Heart left ventricle (tissue), 16 donors: ENCODE measurements at regions of chr20 and their contacts with region 1.

Region 1: DNA sequence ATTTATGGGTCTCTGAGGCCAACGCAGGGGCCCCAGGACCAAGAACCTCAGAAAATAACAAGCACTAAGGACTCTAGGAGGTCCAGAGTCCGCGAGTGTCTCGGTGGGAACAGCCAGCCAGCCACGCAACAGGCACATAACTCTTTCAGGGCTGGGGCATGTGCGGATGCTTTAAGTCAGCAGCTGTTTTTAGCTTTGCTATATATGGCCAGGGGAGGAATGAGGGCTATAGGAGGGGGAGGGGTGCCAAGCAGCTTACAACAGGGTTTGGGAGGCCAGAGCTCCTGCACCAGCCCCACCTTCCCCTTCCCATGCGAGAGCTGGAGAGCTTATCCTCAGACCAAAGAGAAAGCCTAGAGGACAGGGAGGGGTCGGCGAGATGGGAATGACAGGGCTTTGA is 6.2 kb downstream of the JPH2 start:
- DNase-seq: peak; percentile 65 to 89 (median 80)
- ATAC-seq: peak; percentile 83 to 90 (median 88)
- H3K4me3 ChIP-seq: peak overlapping the region in 9 of 12 donors; percentile 7 to 87 (median 67)
- H3K27ac ChIP-seq: peak overlapping the region; percentile 64 to 97 (median 88)
- H3K4me1 ChIP-seq: peaks cover 0 to 57% (median 22%) of the 10 kb centered on the region in 12 donors
- H3K27me3 ChIP-seq: peaks cover 0 to 3% (median 0%) of the 10 kb centered on the region in 9 donors
- CTCF ChIP-seq: no peak
- POLR2A ChIP-seq: peak in 1 of 2 donors; percentile 71

Region 2: DNA sequence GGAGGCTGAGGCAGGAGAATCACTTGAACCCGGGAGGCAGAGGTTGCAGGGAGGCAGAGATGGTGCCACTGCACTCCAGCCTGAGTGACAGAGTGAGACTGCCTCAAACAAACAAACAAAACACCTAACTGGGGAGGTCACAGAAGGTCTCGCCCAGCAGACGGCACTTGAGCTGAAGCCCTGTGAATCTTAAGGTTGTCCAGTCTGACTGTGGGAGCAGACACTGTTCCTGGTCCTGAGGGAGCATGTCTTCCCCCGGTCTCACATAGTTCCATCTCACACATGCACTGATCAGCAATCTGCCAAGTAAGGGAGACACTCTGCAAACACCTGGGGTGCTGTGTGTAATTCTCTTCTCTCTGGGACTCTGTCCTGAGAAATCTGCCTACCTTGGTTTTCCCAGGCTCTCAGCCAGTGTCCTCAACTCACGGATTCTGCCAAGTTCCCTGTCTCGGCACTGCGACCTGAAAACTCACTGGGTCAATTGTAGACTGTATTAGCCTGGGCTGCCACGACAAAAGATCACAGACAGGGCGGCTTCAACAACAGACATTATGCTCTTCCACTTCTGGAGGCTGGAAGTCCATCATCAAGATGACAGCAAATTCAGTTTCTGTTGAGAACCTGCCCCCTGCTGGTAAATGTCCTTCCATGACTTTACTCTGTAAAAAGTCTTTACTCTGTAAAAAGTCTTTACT is 88.1 kb before region 1 on chr20:
- intact Hi-C with region 1: no loop called
- DNase-seq: no peak
- ATAC-seq: no peak
- H3K4me3 ChIP-seq: no peak overlapping the region
- H3K27ac ChIP-seq: no peak overlapping the region
- H3K4me1 ChIP-seq: peaks cover 0 to 2% (median 0%) of the 10 kb centered on the region in 12 donors
- H3K27me3 ChIP-seq: peaks cover 0 to 19% (median 0%) of the 10 kb centered on the region in 9 donors
- CTCF ChIP-seq: peak in 11 of 12 donors; percentile 17 to 50 (median 35)
- POLR2A ChIP-seq: no peak

Region 3: DNA sequence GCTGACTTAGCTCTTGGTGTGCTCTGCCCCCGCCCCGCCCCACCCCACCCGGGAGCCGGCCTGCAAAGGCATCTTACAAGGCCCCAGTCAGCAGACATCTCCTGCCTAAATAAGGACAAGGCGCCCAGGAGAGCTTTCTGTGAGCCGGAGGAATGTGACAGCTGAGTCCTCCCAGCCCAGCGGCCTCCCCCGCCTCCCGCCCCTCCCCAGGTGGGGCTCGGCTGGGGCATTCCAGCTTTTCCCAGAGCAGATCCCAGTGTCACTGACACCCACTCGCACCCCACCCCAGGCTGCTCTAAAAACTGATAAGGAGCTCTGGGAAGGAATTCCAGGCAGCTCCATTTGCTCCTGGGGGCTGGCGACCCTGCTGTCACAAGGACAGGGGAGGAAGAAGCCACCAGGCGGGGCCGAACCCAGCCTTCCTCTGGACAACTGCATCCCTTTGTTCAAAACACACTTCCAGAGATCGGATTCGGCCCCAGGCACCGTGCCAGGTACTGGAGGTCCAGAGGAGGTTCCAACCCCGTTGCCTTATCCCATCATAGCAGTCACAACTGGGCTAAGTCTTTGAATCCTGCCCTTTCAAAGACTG is 43.5 kb before region 1 on chr20:
- intact Hi-C with region 1: loop called in 4 of 10 experiments (anchors 5 kb)
- DNase-seq: peak; percentile 78 to 81 (median 80)
- ATAC-seq: peak; percentile 73 to 85 (median 75)
- H3K4me3 ChIP-seq: peak overlapping the region in 1 of 12 donors; percentile 1
- H3K27ac ChIP-seq: peak overlapping the region; percentile 64 to 95 (median 88)
- H3K4me1 ChIP-seq: peaks cover 8 to 77% (median 33%) of the 10 kb centered on the region in 12 donors
- H3K27me3 ChIP-seq: no peaks in the 10 kb centered on the region
- CTCF ChIP-seq: no peak
- POLR2A ChIP-seq: no peak

Region 4: GRCh38 chr20:44142413-44142812 is 38.4 kb before region 1 on chr20:
- intact Hi-C with region 1: loop called in 4 of 10 experiments (anchors 5 kb)
- DNase-seq: peak in 1 of 5 donors; percentile 33
- ATAC-seq: peak in 1 of 4 donors; percentile 3
- H3K4me3 ChIP-seq: no peak overlapping the region
- H3K27ac ChIP-seq: peak overlapping the region; percentile 38 to 96 (median 90)
- H3K4me1 ChIP-seq: peaks cover 11 to 95% (median 49%) of the 10 kb centered on the region in 12 donors
- H3K27me3 ChIP-seq: no peaks in the 10 kb centered on the region
- CTCF ChIP-seq: no peak
- POLR2A ChIP-seq: no peak

Region 5: DNA sequence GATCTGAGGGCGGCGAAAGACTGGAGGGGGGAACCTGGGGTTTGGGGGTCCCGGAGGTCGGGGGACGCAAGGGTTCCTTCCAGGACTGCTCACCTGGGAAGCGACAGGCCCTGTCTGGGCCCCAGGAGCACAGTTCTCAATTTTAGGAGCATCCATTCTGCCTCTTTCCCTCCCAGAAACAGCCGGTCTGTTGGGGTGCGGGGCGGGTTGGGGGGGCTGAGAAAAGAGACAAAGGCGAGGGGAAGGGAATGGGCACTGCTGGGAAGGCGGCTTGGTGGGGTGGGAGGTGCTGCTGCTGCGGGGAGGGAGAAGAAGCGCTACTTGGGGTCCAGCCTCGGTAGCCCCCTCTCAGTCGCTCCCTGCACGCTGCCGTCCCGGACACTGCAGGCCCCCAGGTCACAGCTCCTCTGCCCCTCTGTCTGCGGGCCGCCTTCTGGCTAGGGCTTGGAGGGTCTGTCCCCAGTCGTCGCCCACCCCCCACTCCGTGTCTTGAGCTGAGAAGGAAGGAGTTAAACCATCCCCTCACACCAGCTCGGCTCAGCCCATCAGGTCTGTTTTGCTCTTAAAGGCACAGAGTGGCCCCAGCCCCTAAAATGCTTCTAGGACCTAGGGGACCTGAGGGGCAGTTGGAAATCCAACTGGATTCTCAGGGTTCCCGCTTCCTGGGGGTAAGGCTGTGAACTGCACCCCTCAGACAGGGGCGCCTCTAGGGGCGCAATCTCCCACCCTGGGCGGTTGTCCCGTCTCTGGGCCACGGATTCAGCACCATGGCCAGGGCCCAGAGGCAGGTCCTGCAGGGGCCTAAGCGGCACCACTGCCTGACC is 67.0 kb after region 1 on chr20:
- intact Hi-C with region 1: no loop called
- DNase-seq: peak in 4 of 5 donors; percentile 37 to 71 (median 48)
- ATAC-seq: peak in 3 of 4 donors; percentile 74 to 88 (median 81)
- H3K4me3 ChIP-seq: peak overlapping the region in 11 of 12 donors; percentile 4 to 53 (median 41)
- H3K27ac ChIP-seq: no peak overlapping the region
- H3K4me1 ChIP-seq: peaks cover 0 to 16% (median 9%) of the 10 kb centered on the region in 12 donors
- H3K27me3 ChIP-seq: peaks cover 0 to 21% (median 0%) of the 10 kb centered on the region in 9 donors
- CTCF ChIP-seq: peak; percentile 18 to 56 (median 35)
- POLR2A ChIP-seq: no peak